ENCODE measurements at regions of chr16 and their contacts with region 1.

Region 1: DNA sequence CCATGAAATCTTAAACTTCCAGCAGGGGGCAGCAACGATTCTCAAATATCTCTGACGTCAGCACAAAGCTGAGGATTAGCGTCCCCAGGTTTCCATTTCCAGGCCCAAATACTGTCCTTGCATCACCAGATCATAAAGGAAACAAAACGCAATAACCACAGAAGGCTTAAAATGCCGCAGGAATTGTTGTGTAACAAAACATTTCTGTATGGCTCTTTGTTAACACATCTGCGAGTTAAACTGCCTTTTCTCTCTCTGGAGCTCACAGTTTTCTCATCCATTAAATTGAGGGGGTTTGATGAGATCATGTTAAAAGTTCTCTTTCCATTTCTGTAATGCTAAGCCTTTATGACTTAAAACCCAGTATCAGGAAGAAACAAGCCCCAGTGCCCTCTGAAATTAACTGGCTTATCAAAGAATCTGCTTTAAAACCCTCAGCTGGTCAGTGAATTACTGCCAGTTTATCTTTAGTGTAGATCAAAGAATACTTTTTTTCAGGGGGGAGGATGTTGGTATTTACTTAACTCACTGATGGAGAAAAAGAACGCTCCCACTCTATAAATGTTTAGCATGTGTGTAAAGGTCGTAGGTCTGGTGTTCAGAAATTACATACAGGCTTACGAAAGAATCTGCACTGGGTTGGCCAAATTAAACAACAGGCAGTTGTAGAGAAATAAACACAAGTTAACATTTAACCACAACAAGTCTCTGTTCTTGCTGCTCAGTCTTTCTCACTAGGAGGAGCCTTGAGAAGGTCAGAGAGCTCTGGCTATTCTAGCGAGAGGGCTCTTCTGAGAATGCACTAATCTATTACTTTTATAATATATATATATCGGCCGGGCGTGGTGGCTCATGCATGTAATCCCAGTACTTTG is 10.6 kb upstream of the TERF2 start:
- DNase-seq: peak; percentile 84
- ATAC-seq: peak; percentile 66
- H3K4me3 Mint-ChIP-seq: no peak overlapping the region
- H3K27ac Mint-ChIP-seq: peak overlapping the region; percentile 76
- H3K4me1 Mint-ChIP-seq: peaks cover 24% of the 10 kb centered on the region
- H3K27me3 Mint-ChIP-seq: peaks cover 3% of the 10 kb centered on the region
- CTCF ChIP-seq: peak; percentile 47

Region 2: DNA sequence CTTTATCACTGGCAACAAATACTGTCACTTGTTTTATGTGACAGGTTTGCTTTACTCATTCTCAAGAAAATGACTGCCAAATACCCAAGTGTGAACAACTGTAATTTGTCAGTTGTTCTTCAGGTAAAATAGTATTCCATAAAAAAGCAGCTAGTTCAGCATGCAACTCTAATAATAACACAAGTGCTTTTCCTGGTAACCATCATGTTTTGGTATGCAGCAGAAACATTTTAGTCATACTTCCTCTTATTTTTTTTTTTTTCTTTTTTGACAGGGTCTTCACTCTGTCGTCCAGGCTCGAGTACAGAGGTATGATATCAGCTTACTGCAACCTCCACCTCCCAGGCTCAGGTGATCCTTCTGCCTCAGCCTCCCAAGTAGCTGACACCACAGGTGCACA is 15.2 kb before region 1 on chr16:
- CTCF ChIA-PET with region 1: interaction called, 39 read pairs
- POLR2A ChIA-PET with region 1: interaction called, 5 read pairs
- intact Hi-C with region 1: no loop called
- DNase-seq: no peak
- ATAC-seq: no peak
- H3K4me3 Mint-ChIP-seq: no peak overlapping the region
- H3K27ac Mint-ChIP-seq: peak overlapping the region; percentile 55
- H3K4me1 Mint-ChIP-seq: peaks cover 45% of the 10 kb centered on the region
- H3K27me3 Mint-ChIP-seq: no peaks in the 10 kb centered on the region
- CTCF ChIP-seq: no peak

Region 3: DNA sequence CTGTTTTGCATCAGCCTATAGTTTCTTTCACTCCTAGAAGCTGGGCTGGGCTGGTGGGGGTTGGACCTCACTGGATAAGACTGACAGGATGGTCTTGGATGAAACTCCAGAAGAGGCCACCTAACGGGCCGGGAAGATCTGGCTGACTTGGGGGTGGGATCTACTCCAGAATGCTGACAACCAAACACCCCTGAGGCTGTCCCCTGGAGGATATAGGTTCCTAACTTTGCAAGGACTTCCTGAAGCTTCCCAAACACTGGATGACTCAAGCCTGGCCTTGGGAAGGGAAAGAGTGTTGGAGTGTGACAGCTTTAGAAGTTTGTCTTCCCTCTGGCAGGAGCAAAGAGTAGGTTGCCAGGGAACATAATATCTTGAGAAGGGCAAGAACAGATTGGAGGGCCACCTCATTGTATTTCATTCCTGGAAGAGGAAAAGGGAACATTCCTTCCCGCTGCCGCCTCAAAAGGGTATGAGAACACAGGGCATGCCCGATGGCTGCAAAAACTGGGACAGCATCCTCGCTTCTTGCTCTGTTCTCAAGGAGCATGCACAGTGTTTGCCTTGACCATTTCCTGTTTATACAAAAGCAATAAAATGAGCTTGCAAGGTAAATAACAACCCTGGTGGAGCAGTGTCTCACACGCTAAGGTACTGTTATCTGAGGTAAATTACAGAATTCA is 21.2 kb after region 1 on chr16:
- CTCF ChIA-PET with region 1: interaction called, 50 read pairs
- POLR2A ChIA-PET with region 1: interaction called, 3 read pairs
- intact Hi-C with region 1: no loop called
- DNase-seq: no peak
- ATAC-seq: no peak
- H3K4me3 Mint-ChIP-seq: no peak overlapping the region
- H3K27ac Mint-ChIP-seq: no peak overlapping the region
- H3K4me1 Mint-ChIP-seq: no peaks in the 10 kb centered on the region
- H3K27me3 Mint-ChIP-seq: no peaks in the 10 kb centered on the region
- CTCF ChIP-seq: no peak

Region 4: GRCh38 chr16:69443927-69444631 is 47.7 kb after region 1 on chr16:
- CTCF ChIA-PET with region 1: interaction called, 17 read pairs
- POLR2A ChIA-PET with region 1: interaction called, 3 read pairs
- intact Hi-C with region 1: no loop called
- DNase-seq: peak; percentile 19
- ATAC-seq: peak; percentile 79
- H3K4me3 Mint-ChIP-seq: peak overlapping the region; percentile 68
- H3K27ac Mint-ChIP-seq: peak overlapping the region; percentile 93
- H3K4me1 Mint-ChIP-seq: peaks cover 42% of the 10 kb centered on the region
- H3K27me3 Mint-ChIP-seq: no peaks in the 10 kb centered on the region
- CTCF ChIP-seq: no peak

Region 5: DNA sequence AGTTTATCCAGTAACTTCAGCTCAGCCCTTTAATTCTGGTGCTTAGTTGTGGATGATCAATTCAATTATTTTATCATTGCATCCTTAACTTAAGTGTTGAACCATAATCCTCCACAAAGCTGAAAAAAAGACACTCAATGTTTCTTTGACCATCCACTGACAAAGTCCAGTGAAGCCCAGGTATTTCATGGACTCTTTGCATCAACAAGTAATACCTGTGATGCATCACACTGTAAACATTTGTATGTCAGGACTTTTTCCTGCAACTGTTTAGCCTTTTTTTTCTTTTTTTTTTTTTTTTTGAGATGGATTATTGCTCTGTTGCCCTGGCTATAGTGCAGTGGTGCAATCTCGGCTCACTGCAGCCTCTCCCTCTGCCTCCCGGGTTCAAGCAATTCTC is 162.7 kb after region 1 on chr16:
- CTCF ChIA-PET with region 1: interaction called, 18 read pairs
- POLR2A ChIA-PET with region 1: interaction called, 17 read pairs
- intact Hi-C with region 1: loop called (anchors 2 kb)
- DNase-seq: no peak
- ATAC-seq: no peak
- H3K4me3 Mint-ChIP-seq: no peak overlapping the region
- H3K27ac Mint-ChIP-seq: no peak overlapping the region
- H3K4me1 Mint-ChIP-seq: peaks cover 45% of the 10 kb centered on the region
- H3K27me3 Mint-ChIP-seq: no peaks in the 10 kb centered on the region
- CTCF ChIP-seq: no peak

Region 6: DNA sequence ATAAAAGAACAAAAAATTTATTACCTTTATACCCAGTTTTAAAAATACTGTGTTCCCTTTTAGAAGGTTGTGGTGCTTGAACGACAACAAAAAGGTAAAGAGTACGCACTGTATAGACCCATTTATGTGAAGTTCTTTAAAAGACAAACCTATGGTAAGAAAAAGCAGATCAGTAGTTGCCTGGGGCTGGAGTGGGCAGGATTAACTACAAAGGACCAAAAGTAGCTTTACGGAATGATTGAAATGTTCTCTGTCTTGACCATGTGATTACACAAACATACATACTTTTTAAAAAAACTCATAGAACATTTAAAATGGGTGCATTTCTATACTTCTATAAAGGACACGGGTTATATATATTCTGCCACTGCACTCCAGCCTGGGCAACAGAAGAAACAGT is 181.0 kb after region 1 on chr16:
- CTCF ChIA-PET with region 1: interaction called, 15 read pairs
- POLR2A ChIA-PET with region 1: no interaction called
- intact Hi-C with region 1: no loop called
- DNase-seq: no peak
- ATAC-seq: no peak
- H3K4me3 Mint-ChIP-seq: no peak overlapping the region
- H3K27ac Mint-ChIP-seq: no peak overlapping the region
- H3K4me1 Mint-ChIP-seq: peaks cover 39% of the 10 kb centered on the region
- H3K27me3 Mint-ChIP-seq: no peaks in the 10 kb centered on the region
- CTCF ChIP-seq: no peak

Region 7: DNA sequence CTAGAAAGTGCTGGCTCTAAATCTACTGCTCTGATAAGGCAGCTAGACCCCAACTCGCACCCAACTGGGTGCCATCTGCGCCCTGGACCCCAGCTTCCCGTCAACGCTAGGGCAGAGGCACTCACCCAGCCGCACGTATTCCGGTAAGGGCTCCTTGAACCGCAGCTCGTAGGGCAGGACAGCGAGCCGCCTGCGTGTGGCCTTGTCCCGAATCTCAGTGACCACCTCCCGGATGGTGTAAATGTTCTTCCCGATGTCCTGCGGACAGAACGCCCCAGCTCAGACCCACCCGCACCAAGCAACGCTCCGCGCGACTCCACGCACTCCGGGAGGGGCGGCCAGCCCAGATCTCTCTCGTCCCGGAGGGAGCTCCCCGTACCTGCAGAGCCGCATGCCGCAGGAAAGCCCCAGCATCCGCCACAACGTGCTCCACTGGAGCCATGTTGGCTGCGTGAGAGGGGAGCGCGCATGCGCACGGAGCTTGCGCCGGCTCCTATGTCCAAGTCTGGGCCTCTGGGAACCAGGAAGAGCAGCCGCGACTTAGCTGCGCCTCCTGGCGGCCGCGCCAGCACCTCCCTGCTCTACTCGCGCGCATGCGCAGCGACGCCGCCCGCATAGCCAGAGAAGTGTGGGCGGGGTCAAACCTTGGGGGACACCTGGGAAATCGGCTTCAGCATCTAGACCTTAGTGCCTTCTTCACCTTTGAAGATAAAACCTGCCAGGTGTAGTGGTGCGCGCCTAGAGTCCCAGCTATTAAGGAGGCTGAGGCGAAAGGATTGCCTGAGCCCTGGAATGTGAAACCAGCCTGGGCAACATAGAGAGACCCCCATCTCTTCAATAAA is 358.3 kb after region 1 on chr16 and contains the start of gene NOB1:
- CTCF ChIA-PET with region 1: interaction called, 33 read pairs
- POLR2A ChIA-PET with region 1: no interaction called
- intact Hi-C with region 1: no loop called
- DNase-seq: peak; percentile 97
- ATAC-seq: peak; percentile 99
- H3K4me3 Mint-ChIP-seq: peak within 1 kb of the TSS; percentile 100
- H3K27ac Mint-ChIP-seq: peak within 1 kb of the TSS; percentile 100
- H3K4me1 Mint-ChIP-seq: peaks cover 22% of the 10 kb centered on the region
- H3K27me3 Mint-ChIP-seq: no peaks in the 10 kb centered on the region
- CTCF ChIP-seq: peak; percentile 90
- total RNA-seq, gene NOB1: 139 to 146 TPM